Left colon (tissue), 2 donors: ENCODE measurements at regions of chr14 and their contacts with region 1.

Region 1: GRCh38 chr14:104137297-104138097 is 890 bp upstream of the KIF26A start:
- DNase-seq: peak in 1 of 2 donors; percentile 76
- ATAC-seq: peak; percentile 78

Region 2: DNA sequence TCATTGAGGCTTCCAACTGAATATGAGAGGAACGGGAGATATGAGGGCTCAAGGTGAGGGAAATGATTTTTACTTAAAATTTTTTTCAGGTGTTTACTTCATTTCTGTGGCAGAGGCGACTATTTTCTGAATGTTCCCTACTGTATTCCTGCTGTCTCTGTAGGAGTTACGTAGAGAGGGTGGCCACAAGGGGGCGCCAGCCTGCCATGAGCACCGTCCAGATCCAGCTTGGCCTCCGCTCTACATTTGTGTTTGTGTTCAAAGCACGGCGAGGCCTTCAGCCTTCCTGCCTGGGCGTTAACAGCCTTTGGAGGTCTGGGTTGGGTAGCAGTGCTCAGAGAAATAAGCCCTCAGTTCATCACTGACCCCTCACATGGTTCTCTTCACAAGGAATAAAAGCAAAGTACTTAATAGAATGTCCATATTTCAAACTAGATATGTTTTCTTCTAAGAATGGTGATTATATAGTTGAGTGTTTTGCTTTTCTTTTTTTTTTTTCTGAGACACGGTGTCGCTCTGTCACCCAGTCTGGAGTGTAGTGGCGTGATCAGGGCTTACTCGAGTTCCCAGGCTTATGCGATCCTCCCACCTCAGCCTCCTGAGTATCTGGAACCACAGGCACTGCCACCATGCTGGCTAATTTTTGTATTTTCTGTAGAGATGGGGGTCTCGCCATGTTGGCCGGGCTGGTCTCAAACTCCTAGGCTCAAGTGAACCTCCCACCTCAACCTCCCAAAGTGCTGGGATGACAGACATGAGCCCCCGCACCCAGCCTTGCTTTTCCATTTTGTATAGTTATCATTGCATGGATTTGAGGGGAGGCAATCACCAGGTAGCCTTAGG is 637.1 kb before region 1 on chr14:
- intact Hi-C with region 1: no loop called
- DNase-seq: peak; percentile 82 to 97
- ATAC-seq: peak; percentile 96

Region 3: GRCh38 chr14:104563742-104564615 is 426.5 kb after region 1 on chr14:
- intact Hi-C with region 1: loop called (anchors 5 kb)
- DNase-seq: peak; percentile 52 to 76
- ATAC-seq: peak; percentile 91